Activated CD4-positive, alpha-beta memory T cell treated with anti-CD3 and anti-CD28 coated beads, Interleukin-2, amount 10 ng/mL, durations not matched to agents 7 days and 5 days (primary cell): ENCODE measurements at regions of chr10 and their contacts with region 1.

Region 1: DNA sequence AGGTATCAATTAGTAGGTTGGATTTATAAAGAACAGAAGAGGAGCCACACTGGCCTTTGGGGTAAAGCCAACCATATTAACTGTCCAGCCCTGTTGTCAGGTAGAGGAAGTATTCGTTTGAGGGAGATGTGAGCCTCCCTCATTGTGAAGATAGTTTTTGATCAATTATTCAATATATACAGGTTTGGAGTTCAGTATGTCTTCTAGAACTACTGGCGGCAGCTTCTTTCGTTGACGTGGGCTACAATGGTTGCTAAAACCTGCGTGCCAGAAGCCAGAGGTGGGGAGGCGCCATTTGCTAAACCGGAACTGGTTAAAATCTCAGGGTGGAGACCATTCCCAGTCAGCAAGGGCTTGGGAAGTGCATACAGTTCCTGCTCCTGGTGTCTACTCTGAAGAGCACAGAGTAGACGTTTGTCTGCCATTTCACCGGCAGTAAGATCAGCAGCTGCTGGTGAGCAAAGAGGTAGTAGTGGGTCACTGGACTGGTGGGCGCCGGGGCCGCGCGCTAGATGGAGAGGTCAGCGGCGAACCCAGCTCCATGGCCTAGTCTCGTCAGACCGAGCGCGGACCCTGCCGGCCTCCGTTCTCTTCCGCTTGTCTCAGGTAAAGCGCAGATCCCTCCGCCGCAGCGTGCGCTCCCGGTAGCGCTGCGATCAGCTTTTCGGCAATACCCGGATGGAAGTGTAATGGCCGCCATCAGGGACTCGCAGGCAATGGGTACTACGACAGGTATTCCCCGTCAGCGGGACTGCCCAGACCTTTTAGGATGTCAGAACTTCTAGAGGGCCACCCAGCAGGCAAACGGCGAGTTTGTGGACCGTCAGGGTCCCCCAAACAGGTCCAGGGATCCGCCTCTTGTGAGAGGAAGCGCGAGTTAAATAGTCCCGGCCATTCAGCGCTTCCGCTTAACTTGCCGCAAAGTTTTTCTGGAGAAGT is at the start of gene ZNF518A:
- DNase-seq: peak; percentile 90
- H3K4me3 Mint-ChIP-seq: peak within 1 kb of the TSS; percentile 91
- H3K27ac Mint-ChIP-seq: peak within 1 kb of the TSS; percentile 99
- H3K4me1 Mint-ChIP-seq: peaks cover 29% of the 10 kb centered on the region
- H3K27me3 Mint-ChIP-seq: peaks cover 23% of the 10 kb centered on the region
- total RNA-seq, gene ZNF518A: 16.0 to 16.2 TPM

Region 2: DNA sequence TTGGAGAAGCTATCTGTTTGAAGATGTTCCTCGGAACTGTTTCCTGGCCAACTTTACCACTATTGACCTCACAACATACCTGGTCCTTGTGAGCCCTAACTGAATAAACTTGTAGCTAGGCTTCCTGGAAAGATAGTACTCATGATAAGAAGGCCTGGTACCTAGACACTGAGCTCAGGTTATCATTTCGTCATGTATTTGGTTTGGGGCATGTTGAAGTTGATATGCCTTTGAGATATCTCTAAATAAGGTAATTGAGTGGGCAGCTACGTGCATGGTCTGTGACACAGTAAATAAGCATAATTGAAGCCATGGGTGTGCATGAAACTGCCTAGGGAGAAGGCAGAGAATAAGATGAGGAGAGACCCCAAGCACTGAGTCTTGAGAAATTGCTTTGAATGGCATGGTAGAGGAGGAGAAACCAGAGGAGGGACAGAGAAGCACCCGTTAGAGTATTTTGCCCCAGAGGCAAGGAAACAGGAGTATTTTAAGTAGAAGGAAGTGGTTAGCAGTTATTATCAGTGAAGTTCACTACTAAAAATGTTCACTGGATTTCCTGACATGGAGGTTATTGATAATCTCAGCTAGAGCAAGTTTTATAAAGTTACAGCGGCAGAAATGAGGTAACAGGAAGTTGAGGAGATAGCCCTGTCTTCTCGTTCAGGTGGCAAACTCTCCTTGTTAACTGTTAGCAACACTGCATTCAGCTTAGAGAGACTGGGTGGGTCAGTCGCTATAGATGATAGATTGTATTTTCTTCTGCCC is 166.2 kb before region 1 on chr10:
- CTCF ChIA-PET with region 1: no interaction called
- POLR2A ChIA-PET with region 1: interaction called, 14 read pairs
- DNase-seq: no peak
- H3K4me3 Mint-ChIP-seq: peak overlapping the region; percentile 12
- H3K27ac Mint-ChIP-seq: peak overlapping the region; percentile 88
- H3K4me1 Mint-ChIP-seq: peaks cover 23% of the 10 kb centered on the region
- H3K27me3 Mint-ChIP-seq: peaks cover 3% of the 10 kb centered on the region

Region 3: DNA sequence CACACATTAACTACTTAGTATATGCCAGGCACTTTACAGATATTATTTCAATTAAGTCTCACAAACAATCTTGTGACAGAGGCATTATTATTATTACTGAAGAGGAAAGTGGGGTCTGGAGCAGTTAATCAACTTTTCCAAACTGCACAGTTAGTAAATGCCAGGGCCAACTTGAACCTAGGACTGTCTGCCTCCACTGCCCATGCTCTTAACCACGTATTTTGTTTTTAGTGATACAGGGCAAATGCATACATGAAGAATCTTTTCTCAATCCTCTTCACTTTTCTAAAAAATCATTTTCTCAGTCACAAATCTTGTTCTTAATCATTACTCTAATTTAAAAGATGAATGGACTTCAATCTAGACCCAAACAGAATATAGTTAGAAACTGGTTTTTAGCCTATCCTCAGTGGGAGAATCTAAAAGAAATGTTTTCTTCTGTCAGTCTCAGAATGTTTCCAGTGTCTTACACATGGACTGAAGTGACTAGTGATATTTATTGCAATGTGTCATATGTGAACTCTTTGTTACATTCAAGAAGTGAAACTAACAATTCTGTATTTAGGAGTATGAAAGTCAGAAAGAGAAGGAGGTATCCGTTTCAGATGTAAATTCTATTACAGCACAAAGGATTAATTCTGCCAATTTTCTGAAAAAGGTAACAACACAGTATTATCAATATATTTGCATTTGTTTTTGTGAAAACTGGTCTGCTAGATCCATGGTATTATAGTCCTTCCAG is 141.8 kb before region 1 on chr10:
- CTCF ChIA-PET with region 1: no interaction called
- POLR2A ChIA-PET with region 1: no interaction called
- DNase-seq: no peak
- H3K4me3 Mint-ChIP-seq: no peak overlapping the region
- H3K27ac Mint-ChIP-seq: no peak overlapping the region
- H3K4me1 Mint-ChIP-seq: no peaks in the 10 kb centered on the region
- H3K27me3 Mint-ChIP-seq: peaks cover 20% of the 10 kb centered on the region

Region 4: DNA sequence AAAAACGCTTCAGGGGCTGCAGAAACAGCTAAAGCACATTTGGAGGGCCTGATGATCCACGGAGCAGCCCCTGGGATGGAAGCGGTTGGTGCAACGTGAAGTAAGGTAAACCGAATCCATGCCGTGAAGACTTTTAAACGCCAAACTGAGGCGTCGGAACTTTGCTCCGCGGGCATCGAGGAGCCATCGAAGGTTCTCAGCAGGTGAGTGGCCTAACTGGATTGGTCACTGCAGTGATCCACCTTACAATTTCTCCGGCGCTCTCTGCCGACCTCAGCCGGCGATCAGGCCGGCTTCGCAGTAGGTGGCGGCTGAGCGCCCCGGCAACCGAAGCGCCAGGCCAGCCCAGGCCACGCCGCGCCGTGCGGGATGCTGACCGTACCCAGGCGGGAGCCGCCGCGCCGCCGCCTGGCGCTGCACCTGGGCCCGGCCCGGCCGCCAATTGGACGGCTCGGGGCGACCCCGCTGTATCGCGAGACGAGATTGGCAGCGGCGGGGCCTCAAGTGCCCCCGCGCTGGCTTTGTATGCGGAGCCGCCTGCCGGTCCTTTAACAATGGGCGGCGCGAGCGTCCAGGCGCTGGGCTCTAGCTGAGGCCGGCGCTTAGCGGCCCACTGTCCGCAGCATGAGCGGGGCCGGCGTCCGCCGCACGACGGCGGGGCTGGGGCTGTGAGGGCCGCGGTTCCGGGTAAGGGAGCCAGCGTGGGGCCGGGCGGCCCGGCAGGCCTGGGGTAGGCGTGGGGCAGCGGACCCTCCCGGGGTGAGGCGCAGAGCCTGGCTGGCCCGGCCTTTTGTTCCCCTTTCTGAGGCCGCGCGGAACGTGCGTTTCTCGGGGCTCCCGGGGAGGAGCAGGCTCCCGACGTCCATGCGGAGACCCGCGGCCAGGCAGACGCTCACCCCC is 86.4 kb before region 1 on chr10 and contains the start of gene CCNJ:
- CTCF ChIA-PET with region 1: interaction called, 4 read pairs
- POLR2A ChIA-PET with region 1: interaction called, 33 read pairs
- DNase-seq: peak; percentile 85
- H3K4me3 Mint-ChIP-seq: peak within 1 kb of the TSS; percentile 88
- H3K27ac Mint-ChIP-seq: peak within 1 kb of the TSS; percentile 63
- H3K4me1 Mint-ChIP-seq: peaks cover 33% of the 10 kb centered on the region
- H3K27me3 Mint-ChIP-seq: peaks cover 4% of the 10 kb centered on the region
- total RNA-seq, gene CCNJ: 4.7 to 5.6 TPM

Region 5: GRCh38 chr10:96073722-96074121 is 55.9 kb before region 1 on chr10:
- CTCF ChIA-PET with region 1: no interaction called
- POLR2A ChIA-PET with region 1: interaction called, 18 read pairs
- DNase-seq: no peak
- H3K4me3 Mint-ChIP-seq: no peak overlapping the region
- H3K27ac Mint-ChIP-seq: peak overlapping the region; percentile 64
- H3K4me1 Mint-ChIP-seq: peaks cover 33% of the 10 kb centered on the region
- H3K27me3 Mint-ChIP-seq: no peaks in the 10 kb centered on the region

Region 6: DNA sequence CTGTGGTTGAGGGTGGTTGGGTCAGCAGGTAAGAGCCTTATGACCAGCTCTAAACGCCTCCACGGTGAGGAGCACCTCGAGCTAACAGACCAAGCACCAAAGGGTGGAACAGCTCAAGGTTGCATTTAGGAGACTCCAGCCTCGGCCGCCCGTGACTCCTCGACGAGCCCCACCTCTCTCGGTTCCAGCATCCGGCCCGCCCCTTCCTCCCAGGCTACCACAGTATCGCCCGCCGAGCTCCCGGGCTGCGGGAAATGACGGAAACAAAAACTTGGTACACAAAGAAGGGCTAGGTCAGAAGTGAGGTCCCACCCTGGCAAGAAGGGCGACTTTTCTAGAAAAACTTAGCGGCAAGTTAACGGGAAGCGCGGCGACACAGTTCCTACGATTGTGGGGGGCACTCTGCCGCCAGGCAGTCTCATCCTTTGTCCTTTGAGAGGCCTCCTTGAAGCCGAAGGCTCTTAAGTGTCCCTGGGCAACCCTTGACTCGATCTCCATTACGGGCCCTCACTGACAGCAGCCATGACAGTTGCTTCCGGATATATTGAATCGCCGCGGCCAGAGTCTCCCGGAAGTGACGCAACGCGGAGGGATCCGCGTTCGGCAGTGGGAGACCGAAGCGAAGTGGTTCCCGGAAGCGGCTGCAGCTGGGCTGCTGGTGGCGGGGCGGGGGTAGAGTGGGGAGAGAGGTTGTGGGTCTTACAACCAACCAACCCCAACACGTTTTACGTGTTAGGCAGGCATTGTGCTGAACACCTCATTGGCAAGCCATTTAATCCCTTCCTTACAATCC is 39.8 kb before region 1 on chr10:
- CTCF ChIA-PET with region 1: interaction called, 31 read pairs
- POLR2A ChIA-PET with region 1: interaction called, 229 read pairs
- DNase-seq: peak; percentile 95
- H3K4me3 Mint-ChIP-seq: peak overlapping the region; percentile 88
- H3K27ac Mint-ChIP-seq: peak overlapping the region; percentile 97
- H3K4me1 Mint-ChIP-seq: peaks cover 14% of the 10 kb centered on the region
- H3K27me3 Mint-ChIP-seq: peaks cover 19% of the 10 kb centered on the region

Region 7: DNA sequence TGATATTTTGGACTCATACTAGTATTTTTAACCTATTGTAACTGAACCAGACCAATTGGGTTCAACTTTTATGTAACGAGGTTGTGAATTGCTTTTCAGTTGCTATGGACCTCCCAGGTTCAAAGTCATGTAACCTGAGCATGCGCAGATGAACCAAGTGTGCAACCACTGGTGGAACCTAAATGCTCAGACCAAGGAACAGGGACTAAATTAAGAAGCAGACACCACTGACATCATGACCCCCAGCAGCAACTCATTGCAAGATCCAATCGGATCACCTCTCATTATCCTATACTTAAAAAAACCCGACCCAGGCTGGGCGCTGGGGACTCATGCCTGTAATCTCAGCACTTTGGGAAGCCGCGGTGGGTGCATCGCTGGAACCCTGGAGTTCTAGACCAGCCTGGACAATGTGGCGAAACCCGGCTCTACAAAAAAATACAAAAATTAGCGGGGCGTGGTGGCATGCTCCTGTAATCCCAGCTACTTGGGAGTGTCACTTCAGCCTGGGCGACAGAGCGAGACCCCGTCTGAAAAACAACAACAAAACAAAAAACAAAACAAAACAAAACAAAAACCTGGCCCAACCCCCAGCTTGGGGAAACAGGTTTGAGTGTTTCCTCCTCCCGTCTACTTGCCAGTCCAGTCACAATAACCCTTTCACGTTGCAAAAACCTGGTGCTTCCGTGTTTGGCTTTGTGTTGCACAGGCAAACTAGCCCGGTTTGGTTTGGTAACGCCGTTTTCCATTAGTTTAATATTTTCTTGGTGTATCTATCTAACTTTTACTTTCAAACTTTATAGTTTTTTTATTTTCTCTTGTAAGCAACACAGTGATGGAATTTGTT is 10.8 kb before region 1 on chr10:
- CTCF ChIA-PET with region 1: interaction called, 8 read pairs
- POLR2A ChIA-PET with region 1: interaction called, 26 read pairs
- DNase-seq: no peak
- H3K4me3 Mint-ChIP-seq: no peak overlapping the region
- H3K27ac Mint-ChIP-seq: no peak overlapping the region
- H3K4me1 Mint-ChIP-seq: peaks cover 3% of the 10 kb centered on the region
- H3K27me3 Mint-ChIP-seq: peaks cover 48% of the 10 kb centered on the region

Region 8: DNA sequence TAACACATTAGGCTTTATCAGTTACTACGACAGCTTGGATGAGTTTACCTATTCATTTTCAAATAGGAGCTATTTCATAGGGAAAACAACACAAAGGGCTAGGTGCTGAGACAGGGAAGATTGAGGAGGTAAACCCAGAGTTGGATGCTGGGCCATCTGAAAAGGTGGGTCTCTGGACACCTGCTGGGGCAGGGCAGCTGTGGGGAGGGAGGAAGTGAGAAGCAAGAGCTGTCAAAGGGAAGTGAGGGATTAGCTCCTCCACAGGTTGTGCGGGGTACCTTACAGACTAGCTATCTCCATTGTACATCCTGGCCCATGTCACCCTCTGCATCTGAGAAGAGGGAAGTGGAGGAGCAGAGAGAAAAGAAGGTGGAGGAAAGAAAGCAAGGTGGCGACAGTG is 92.8 kb after region 1 on chr10:
- CTCF ChIA-PET with region 1: no interaction called
- POLR2A ChIA-PET with region 1: no interaction called
- DNase-seq: no peak
- H3K4me3 Mint-ChIP-seq: no peak overlapping the region
- H3K27ac Mint-ChIP-seq: no peak overlapping the region
- H3K4me1 Mint-ChIP-seq: no peaks in the 10 kb centered on the region
- H3K27me3 Mint-ChIP-seq: peaks cover 15% of the 10 kb centered on the region